ENCODE measurements at regions of chr3 and their contacts with region 1.

Region 1: GRCh38 chr3:48439820-48440589 is at the starts of genes CCDC51 and TMA7:
- DNase-seq: peak; percentile 98
- H3K4me3 Mint-ChIP-seq: peak within 1 kb of the TSS; percentile 88
- H3K27ac Mint-ChIP-seq: peak within 1 kb of the TSS; percentile 77
- H3K4me1 Mint-ChIP-seq: peaks cover 18% of the 10 kb centered on the region
- H3K27me3 Mint-ChIP-seq: no peaks in the 10 kb centered on the region
- CTCF ChIP-seq: no peak
- total RNA-seq, gene CCDC51: 31.9 and 32.5 TPM in 2 replicates
- total RNA-seq, gene TMA7: 356 and 372 TPM in 2 replicates

Region 2: DNA sequence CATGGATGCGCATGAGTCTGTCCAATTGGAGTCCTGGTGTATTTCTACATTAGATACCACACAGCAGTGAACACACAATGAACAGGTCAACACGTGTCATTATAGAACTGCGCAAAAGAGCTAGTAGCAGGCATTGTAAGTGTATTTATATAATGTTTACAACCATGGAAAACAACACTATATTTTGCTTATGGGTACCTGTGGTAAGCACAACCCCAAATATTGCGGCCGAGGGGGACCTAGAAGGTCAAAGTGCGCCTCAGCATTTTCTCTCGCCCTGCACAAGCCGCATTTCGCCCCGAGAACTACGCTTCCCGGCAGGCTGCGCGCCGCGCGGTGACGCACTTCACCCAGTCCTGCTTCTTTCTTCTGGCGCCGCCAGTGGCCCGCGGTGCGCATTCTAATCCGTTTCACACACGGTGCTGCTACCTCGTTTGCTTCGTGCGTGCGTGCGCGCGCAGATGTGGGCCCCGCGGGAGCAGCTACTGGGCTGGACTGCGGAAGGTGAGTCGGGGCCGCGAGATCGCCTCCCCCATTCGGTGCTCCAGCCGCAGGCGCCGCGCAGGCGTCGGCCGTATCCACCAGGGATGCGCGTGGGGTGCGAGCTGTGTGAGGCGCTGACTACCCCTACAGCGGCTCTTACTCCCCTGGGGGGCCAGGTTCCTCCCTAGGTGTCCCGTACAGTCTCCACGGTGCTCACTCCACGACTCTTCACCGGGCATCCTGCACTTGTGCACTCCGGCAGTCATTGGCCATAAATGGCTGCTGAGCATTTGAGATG is 199.1 kb before region 1 on chr3 and contains the start of gene ZNF589:
- CTCF ChIA-PET with region 1: interaction called, 11 read pairs
- POLR2A ChIA-PET with region 1: interaction called, 14 read pairs
- intact Hi-C with region 1: no loop called
- DNase-seq: peak; percentile 97
- H3K4me3 Mint-ChIP-seq: peak within 1 kb of the TSS; percentile 83
- H3K27ac Mint-ChIP-seq: peak within 1 kb of the TSS; percentile 81
- H3K4me1 Mint-ChIP-seq: no peaks in the 10 kb centered on the region
- H3K27me3 Mint-ChIP-seq: no peaks in the 10 kb centered on the region
- CTCF ChIP-seq: no peak
- total RNA-seq, gene ZNF589: 5.6 and 5.7 TPM in 2 replicates

Region 3: DNA sequence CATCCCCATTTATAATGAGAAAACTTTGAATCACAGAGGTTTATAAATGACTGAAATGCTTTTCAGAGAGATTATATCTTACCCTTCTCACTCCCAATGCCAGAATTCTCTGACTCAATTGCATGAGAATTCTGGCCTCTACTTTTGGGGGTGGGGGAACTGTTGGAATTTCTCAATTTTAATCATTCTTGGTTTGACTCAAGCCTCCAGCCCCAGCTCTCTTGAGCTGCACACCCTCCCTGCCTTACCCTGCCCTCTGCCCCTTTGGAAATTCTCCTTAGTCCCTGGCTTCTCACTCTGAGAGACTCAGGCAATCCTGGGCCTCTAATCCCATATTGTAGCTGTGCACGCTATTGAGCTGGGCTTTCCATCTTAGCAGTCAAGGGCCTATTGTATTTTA is 154.9 kb before region 1 on chr3:
- CTCF ChIA-PET with region 1: interaction called, 98 read pairs
- POLR2A ChIA-PET with region 1: no interaction called
- intact Hi-C with region 1: no loop called
- DNase-seq: no peak
- H3K4me3 Mint-ChIP-seq: no peak overlapping the region
- H3K27ac Mint-ChIP-seq: no peak overlapping the region
- H3K4me1 Mint-ChIP-seq: no peaks in the 10 kb centered on the region
- H3K27me3 Mint-ChIP-seq: no peaks in the 10 kb centered on the region
- CTCF ChIP-seq: no peak

Region 4: DNA sequence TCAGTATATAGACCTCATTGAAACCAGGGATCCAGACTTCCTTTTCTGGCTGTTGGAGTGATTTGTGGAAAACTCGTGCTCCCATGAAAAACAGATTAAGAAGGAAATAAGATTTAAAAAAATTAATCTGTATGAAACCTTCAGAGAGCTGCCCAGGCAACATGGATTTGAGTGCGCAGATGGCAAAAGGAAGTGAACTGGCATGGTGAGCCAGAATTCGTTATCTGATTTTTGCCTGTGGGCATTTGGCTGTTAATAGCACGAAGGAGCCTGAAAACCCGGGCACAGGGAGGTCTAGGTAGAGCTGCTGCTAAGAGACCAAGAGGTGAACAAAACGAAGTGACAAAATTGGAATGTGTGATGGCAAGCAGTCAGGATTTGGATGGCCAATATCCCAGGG is 87.5 kb before region 1 on chr3:
- CTCF ChIA-PET with region 1: interaction called, 10 read pairs
- POLR2A ChIA-PET with region 1: no interaction called
- intact Hi-C with region 1: no loop called
- DNase-seq: no peak
- H3K4me3 Mint-ChIP-seq: no peak overlapping the region
- H3K27ac Mint-ChIP-seq: no peak overlapping the region
- H3K4me1 Mint-ChIP-seq: no peaks in the 10 kb centered on the region
- H3K27me3 Mint-ChIP-seq: peaks cover 18% of the 10 kb centered on the region
- CTCF ChIP-seq: no peak

Region 5: DNA sequence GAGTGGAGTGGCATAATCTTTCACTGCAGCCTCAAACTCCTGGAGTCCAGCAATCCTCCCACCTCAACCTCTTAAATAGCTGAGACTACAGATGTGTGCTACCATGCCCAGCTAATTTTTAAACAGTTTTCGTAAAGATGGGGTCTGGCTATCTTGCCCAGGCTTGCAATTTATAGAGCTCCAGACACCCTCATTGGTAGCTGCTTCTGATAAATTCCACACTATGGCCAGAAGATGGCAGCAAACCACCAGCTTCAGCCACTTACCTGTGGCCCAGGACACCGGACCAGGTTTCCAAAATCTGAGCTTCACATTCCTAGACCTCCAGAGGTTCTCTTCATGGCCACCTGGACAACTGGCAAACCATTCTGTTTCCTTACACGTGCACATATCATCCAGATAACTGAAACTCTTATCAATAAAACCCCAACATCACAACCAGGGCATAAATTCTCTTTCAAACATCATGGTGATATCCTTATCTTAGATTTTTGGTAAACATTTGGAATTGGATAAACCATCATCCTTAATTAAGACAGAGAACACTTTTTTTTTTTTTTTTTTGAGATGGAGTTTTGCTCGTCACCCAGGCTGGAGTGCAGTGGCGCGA is 39.1 kb before region 1 on chr3:
- CTCF ChIA-PET with region 1: interaction called, 647 read pairs
- POLR2A ChIA-PET with region 1: interaction called, 749 read pairs
- intact Hi-C with region 1: loop called (anchors 1 kb)
- DNase-seq: peak; percentile 90
- H3K4me3 Mint-ChIP-seq: peak overlapping the region; percentile 46
- H3K27ac Mint-ChIP-seq: peak overlapping the region; percentile 95
- H3K4me1 Mint-ChIP-seq: peaks cover 34% of the 10 kb centered on the region
- H3K27me3 Mint-ChIP-seq: no peaks in the 10 kb centered on the region
- CTCF ChIP-seq: peak; percentile 96

Region 6: GRCh38 chr3:48532271-48532976 is 92.4 kb after region 1 on chr3:
- CTCF ChIA-PET with region 1: interaction called, 11 read pairs
- POLR2A ChIA-PET with region 1: interaction called, 3 read pairs
- intact Hi-C with region 1: no loop called
- DNase-seq: no peak
- H3K4me3 Mint-ChIP-seq: no peak overlapping the region
- H3K27ac Mint-ChIP-seq: no peak overlapping the region
- H3K4me1 Mint-ChIP-seq: peaks cover 5% of the 10 kb centered on the region
- H3K27me3 Mint-ChIP-seq: no peaks in the 10 kb centered on the region
- CTCF ChIP-seq: no peak

Region 7: GRCh38 chr3:48652923-48653715 is 213.1 kb after region 1 on chr3:
- CTCF ChIA-PET with region 1: no interaction called
- POLR2A ChIA-PET with region 1: no interaction called
- intact Hi-C with region 1: no loop called
- DNase-seq: no peak
- H3K4me3 Mint-ChIP-seq: no peak overlapping the region
- H3K27ac Mint-ChIP-seq: no peak overlapping the region
- H3K4me1 Mint-ChIP-seq: peaks cover 5% of the 10 kb centered on the region
- H3K27me3 Mint-ChIP-seq: no peaks in the 10 kb centered on the region
- CTCF ChIP-seq: no peak

Region 8: DNA sequence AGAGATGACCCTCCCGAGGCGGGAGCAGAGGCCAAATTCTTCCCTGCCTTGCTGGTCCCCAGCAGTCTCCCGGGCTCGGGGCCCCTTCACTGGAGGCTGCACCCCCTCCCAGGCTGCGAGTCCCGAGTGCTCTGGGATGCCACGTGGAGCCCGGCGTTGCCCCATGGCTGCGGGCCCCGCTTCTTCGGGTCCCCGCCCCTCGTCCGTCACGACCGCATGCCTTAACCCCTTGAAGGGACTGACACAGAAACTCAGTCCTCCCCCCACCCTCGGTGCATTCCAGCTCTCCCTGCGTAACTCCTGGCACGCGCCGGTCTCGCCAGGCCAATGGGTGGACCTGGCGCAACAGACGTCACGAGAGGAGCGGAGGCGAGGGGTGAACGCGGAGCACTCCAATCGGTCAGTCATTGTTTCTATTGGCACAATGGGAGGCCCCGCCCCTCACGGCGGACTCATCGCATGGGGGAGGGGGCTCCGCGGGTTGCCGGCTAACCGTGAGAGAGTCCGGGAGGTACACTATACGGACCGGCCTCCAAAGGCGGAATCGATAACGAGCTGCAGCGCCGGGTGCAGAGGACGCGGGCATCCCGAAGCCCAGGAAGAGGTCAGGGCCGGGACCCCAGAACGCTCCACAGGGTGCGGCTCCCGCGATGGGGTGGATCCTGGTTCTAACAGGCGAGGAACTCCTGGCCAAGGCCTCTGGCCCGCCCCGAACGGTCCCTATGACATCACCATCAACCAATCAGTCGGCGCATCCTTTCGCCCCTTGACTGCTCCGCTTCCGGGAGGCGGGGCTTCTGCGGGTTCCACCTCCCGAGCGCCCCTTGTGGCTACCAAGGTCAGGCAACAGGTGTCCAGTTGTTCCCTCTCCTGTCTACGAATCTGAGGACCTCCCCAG is 223.7 kb after region 1 on chr3:
- CTCF ChIA-PET with region 1: no interaction called
- POLR2A ChIA-PET with region 1: interaction called, 17 read pairs
- intact Hi-C with region 1: no loop called
- DNase-seq: peak; percentile 99
- H3K4me3 Mint-ChIP-seq: peak overlapping the region; percentile 96
- H3K27ac Mint-ChIP-seq: peak overlapping the region; percentile 99
- H3K4me1 Mint-ChIP-seq: peaks cover 6% of the 10 kb centered on the region
- H3K27me3 Mint-ChIP-seq: no peaks in the 10 kb centered on the region
- CTCF ChIP-seq: peak; percentile 80

Measured in MCF 10A (cell line).